Common myeloid progenitor, CD34-positive (primary cell): ENCODE measurements at regions of chr5 and their contacts with region 1.

Region 1: GRCh38 chr5:170420780-170421412 is 31.7 kb upstream of the KCNMB1 start:
- DNase-seq: peak; percentile 79 to 84 (median 80)
- H3K4me3 ChIP-seq: no peak overlapping the region
- H3K27ac ChIP-seq: no peak overlapping the region
- H3K4me1 ChIP-seq: peaks cover 0 to 29% (median 16%) of the 10 kb centered on the region in 4 experiments
- H3K27me3 ChIP-seq: no peaks in the 10 kb centered on the region

Region 2: DNA sequence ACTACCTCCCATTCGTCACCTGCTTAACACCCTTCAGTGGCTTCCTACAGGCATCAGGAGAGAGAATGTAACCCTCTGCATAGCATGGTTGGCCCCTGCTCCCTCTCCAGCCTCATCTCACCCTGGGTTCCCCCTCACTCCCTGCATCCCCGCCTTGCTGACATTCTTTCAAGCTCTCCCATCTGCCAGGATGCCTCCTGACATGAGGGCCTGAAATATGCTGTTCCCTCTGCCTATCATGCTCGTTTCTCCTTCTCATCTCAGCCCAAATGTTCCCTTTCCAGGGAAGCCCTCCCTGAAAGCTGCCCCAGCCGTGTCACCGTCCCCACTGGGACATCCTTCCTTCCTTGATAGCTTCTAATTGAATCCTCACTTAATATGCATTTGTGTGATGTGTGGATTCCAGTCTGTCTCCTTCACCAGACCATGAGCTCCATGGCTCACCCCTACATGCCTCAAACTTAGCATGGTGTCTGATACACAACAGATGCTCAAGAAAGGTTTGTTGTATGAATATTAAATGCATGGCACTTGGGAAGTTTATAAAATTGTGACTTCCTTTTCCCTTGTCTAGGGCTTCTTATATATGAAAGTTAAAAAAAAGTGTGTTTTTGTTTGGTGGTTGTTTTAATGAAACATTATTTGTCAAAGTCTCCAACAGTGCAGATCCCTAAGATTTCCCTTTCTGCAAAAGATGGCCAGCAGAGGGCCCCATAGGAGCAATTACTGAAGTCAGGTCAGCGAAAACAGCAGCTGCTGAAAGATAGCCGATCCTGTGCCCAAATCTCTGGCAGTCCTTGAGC is 195.4 kb before region 1 on chr5:
- CTCF ChIA-PET with region 1: interaction called, 87 read pairs
- POLR2A ChIA-PET with region 1: no interaction called
- DNase-seq: peak; percentile 60 to 78 (median 68)
- H3K4me3 ChIP-seq: no peak overlapping the region
- H3K27ac ChIP-seq: no peak overlapping the region
- H3K4me1 ChIP-seq: peaks cover 0 to 4% (median 2%) of the 10 kb centered on the region in 4 experiments
- H3K27me3 ChIP-seq: no peaks in the 10 kb centered on the region

Region 3: GRCh38 chr5:170434966-170435605 is 14.2 kb after region 1 on chr5:
- CTCF ChIA-PET with region 1: interaction called, 43 read pairs
- POLR2A ChIA-PET with region 1: no interaction called
- DNase-seq: peak; percentile 54 to 76 (median 66)
- H3K4me3 ChIP-seq: no peak overlapping the region
- H3K27ac ChIP-seq: no peak overlapping the region
- H3K4me1 ChIP-seq: peaks cover 0 to 3% (median 0%) of the 10 kb centered on the region in 4 experiments
- H3K27me3 ChIP-seq: peaks cover 0 to 6% (median 0%) of the 10 kb centered on the region in 5 experiments